ENCODE measurements at regions of chr16 and their contacts with region 1.

Region 1: DNA sequence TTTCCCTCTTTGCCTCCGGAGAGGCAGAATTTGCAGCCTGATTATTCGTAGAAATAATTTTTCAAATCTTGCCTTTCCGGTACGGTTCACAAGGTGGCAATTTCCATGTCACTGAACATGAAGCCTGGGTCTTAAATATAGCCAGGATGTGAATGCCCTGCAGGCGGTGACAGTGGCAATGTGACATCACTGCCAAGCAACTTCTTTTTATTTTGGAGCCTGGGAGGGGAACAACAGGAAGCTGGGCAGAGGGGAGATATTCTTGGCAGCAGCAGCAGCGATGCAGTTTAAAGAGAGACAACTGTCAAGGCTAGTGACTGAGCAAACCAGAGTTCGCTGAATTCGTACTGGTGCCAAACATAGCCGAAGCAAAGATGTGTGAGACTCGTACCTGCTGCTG is 171.1 kb downstream of the SNX29 start:
- DNase-seq: no peak
- H3K4me3 ChIP-seq: no peak overlapping the region
- CTCF ChIP-seq: no peak
- POLR2A ChIP-seq: no peak

Region 2: GRCh38 chr16:10150906-10151305 is 1996.8 kb before region 1 on chr16:
- intact Hi-C with region 1: loop called (anchors 5 kb)
- DNase-seq: no peak
- H3K4me3 ChIP-seq: no peak overlapping the region
- CTCF ChIP-seq: no peak
- POLR2A ChIP-seq: no peak

Region 3: DNA sequence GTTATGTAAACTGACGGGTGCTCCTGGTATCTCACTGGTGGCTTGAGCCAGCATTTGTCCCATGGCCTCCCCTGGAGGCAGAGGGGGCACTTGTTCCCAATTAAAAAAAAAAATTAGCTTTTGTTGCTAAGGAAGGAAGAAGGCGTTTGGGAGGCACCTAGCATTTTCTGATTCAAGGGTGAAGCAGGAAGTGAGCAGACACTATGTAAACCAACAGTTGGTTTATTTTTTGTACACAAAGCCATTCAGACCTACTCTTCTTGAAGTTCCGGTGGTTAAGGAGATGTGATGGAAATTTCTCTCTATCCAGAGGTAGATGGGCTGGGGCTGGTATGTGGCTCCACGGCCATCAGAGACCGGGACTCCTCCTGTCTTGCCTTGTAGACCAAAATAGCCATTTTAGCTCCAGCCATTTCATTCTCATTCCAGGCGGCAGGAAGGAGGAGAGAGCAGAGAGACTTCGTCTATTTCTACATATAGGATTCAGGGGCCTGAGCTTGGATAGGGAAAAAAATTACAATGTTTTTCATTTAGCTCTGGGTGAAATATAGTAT is 68.2 kb before region 1 on chr16:
- intact Hi-C with region 1: no loop called
- DNase-seq: peak in 1 of 2 donors; percentile 71
- H3K4me3 ChIP-seq: no peak overlapping the region
- CTCF ChIP-seq: no peak
- POLR2A ChIP-seq: no peak

Region 4: DNA sequence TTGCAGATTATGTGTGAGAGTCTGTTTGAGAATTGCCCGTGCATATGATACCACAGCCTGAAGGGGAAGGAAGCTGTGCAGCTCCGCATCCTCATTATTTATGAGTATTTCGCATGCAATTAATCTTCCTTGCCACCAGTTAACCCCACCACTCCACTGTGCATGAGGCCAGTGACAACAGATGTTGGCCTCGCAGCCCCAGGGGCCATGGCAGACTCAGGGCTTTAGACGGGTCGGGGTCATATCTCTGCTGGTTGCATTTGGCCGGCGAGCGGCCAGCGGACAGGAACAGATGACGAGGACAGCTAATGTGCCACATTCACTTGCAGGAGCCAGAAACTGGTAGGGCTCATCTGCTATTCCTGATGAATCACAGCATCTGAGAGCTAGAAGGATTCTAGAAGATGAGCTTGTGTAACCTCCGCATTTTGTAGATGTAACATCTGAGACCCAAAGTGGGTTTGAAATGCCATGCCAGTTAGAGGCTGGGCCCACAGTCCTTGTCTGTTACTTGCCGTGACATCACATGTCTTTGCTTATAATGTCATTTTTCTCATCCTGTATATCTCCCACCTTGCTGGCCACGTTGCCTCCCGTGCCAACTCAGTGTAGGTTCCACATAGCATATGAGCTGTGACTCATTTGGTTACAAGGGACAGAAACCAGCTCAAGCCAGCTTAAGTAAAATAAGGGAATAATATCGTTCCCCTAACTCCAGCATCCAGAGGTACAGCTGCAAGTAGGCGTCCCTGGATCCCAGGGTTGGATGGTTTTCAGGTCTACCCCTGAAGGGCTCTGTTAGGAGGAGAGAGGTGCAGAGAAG is 33.9 kb before region 1 on chr16:
- intact Hi-C with region 1: loop called (anchors 1 kb)
- DNase-seq: no peak
- H3K4me3 ChIP-seq: no peak overlapping the region
- CTCF ChIP-seq: no peak
- POLR2A ChIP-seq: no peak